CD8-positive, alpha-beta T cell (primary cell): ENCODE measurements at regions of chr14 and their contacts with region 1.

Region 1: DNA sequence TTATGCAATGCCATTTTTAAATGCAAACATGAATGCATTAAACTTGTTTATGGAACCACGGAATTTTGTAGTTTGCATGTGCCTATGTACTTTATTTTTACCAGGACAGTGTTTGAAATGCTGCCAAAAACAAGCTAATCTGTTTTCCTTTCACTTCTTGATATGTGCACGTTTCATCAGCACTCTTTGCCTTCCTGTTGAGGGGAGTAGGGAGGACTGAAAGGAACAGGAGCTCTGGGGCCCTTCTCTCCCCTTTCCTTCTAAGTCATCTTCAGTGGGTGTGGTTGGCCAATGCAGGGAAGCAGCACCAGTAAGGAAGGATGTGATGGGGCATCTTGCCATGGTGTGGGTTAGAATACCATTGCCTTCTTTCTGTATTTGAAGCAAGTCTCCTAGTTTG is 12.1 kb upstream of the PPP4R4 start:
- DNase-seq: peak in 1 of 9 experiments; percentile 8
- ATAC-seq: no peak
- H3K4me3 ChIP-seq: no peak overlapping the region
- H3K4me3 Mint-ChIP-seq: no peak overlapping the region
- H3K27ac ChIP-seq: no peak overlapping the region
- H3K27ac Mint-ChIP-seq: no peak overlapping the region
- H3K4me1 ChIP-seq: peaks cover 39% of the 10 kb centered on the region
- H3K4me1 Mint-ChIP-seq: peaks cover 37% of the 10 kb centered on the region
- H3K27me3 ChIP-seq: no peaks in the 10 kb centered on the region
- H3K27me3 Mint-ChIP-seq: peaks cover 7% of the 10 kb centered on the region
- CTCF ChIP-seq: no peak

Region 2: DNA sequence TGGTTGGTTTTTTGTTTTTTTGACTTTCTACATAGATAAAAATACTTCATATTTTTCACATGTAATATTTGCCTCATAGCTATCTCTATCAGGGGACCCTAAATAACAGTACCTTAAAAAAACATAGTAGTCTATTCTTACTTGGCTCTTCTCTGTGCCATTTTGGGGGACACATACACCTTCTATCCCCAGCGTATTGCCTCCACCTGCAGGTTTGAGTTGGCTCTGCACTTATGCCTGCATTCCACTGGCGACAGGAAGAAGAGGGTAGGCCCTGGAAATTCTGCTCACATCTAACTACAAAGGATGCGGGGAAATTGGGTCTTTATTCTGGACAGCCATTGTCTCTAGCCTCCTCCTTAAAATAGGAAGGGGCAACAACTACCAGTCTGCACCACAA is 18.7 kb before region 1 on chr14:
- CTCF ChIA-PET with region 1: interaction called, 11 read pairs
- POLR2A ChIA-PET with region 1: interaction called, 4 read pairs
- intact Hi-C with region 1: loop called in 1 of 2 experiments (anchors 2 kb)
- DNase-seq: peak in 1 of 9 experiments; percentile 16
- ATAC-seq: peak; percentile 40
- H3K4me3 ChIP-seq: no peak overlapping the region
- H3K4me3 Mint-ChIP-seq: no peak overlapping the region
- H3K27ac ChIP-seq: no peak overlapping the region
- H3K27ac Mint-ChIP-seq: no peak overlapping the region
- H3K4me1 ChIP-seq: peaks cover 5% of the 10 kb centered on the region
- H3K4me1 Mint-ChIP-seq: peaks cover 11% of the 10 kb centered on the region
- H3K27me3 ChIP-seq: no peaks in the 10 kb centered on the region
- H3K27me3 Mint-ChIP-seq: peaks cover 4% of the 10 kb centered on the region
- CTCF ChIP-seq: no peak